Activated T-helper 1 cell treated with anti-CD3 and anti-CD28 coated beads, Interleukin-12 subunit alpha, Interleukin-12 subunit beta, Interleukin-2, Interleukin-4 antibody, amounts not matched to agents 30 ng/mL and 10 ng/mL and 1 ng/mL, durations not matched to agents 14 hours and 24 hours and 36 hours (primary cell): ENCODE measurements at regions of chr3 and their contacts with region 1.

Region 1: DNA sequence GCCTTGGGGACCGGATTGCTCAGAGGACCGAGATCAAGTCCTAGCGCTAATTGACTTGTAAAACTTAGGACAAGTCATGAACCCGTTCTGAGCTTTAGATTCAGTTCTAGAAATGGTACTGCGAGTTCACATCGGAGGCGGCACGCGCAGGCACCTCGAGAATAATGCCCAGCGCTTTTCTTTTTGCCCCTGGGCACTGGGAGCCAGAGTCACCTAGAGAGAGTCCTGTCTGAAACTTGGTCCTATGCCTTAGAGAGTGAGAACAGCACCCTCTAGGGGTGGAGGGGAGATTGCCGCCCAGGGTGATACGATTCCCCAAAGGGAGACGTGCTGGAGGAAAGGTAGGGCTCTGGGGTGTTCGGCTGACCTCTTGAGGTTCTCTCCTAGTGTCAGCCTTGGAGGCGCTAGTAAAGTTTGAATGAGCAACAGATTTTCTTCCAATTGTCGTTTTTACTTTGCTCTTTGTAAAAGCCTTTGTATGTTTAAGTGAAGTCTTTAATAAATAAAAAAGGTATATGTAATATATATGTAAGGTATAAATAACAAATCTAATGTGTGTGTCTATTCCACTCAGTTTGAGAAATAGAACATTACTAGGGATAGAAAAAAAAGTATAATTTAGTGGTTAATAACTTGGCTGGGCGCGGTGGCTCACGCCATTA is 826 bp downstream of the EEF1AKMT4 start:
- DNase-seq: peak; percentile 85
- H3K4me3 Mint-ChIP-seq: peak overlapping the region; percentile 93
- H3K27ac Mint-ChIP-seq: peak overlapping the region; percentile 97
- H3K4me1 Mint-ChIP-seq: peaks cover 24% of the 10 kb centered on the region
- H3K27me3 Mint-ChIP-seq: no peaks in the 10 kb centered on the region

Region 2: DNA sequence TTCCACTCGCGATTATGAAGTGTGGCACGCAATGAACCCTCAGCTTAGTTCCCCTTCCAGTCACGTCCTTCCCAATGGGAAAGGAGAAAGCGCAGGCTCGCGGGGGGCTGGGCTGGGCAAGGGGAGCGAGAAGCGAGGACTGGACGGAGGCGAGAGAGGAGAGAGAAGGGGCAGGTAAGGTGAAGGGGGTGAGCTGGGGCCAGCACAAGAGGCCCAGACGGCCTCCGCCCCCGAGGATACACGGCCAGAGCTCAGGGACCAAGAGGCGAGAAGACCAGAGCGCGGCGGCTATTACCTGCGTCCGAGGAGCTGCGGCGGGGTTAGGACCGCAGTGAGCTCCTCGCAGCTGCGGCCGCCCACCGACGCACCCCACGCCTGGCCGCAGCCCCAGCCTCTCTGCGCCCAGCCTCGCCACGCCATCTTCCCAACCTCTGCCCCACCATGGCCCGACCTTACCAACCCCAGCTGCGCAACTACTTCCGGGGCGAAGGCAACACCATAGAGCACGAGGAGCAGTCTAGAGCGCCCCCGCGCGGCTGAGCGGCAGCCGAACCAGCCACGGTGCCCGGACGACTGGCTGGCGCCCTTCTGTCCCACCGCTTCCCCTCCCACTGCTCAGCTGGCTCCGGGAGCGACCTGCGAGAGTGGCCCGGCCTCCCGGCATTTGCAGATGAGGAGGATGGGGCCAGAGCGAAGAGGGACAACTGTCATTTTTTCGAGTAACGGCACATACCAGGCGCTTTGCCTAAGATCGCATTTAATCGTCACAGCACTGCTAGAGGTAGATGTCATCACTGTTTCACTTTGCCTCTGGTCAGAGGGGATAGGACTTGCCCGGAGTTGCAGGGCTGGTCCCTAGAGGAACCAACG is 365.6 kb before region 1 on chr3 and contains the start of gene PARL:
- intact Hi-C with region 1: loop called (anchors 1 kb)
- DNase-seq: peak; percentile 93
- H3K4me3 Mint-ChIP-seq: peak within 1 kb of the TSS; percentile 98
- H3K27ac Mint-ChIP-seq: peak within 1 kb of the TSS; percentile 99
- H3K4me1 Mint-ChIP-seq: peaks cover 35% of the 10 kb centered on the region
- H3K27me3 Mint-ChIP-seq: no peaks in the 10 kb centered on the region
- total RNA-seq, gene PARL: 93.7 and 98.2 TPM in 2 replicates

Region 3: GRCh38 chr3:184135149-184135910 is 115.0 kb before region 1 on chr3 and contains the start of gene EIF2B5:
- intact Hi-C with region 1: loop called (anchors 1 kb)
- DNase-seq: peak; percentile 83
- H3K4me3 Mint-ChIP-seq: peak within 1 kb of the TSS; percentile 92
- H3K27ac Mint-ChIP-seq: peak within 1 kb of the TSS; percentile 85
- H3K4me1 Mint-ChIP-seq: peaks cover 31% of the 10 kb centered on the region
- H3K27me3 Mint-ChIP-seq: no peaks in the 10 kb centered on the region
- total RNA-seq, gene EIF2B5: 75.6 and 75.9 TPM in 2 replicates

Region 4: DNA sequence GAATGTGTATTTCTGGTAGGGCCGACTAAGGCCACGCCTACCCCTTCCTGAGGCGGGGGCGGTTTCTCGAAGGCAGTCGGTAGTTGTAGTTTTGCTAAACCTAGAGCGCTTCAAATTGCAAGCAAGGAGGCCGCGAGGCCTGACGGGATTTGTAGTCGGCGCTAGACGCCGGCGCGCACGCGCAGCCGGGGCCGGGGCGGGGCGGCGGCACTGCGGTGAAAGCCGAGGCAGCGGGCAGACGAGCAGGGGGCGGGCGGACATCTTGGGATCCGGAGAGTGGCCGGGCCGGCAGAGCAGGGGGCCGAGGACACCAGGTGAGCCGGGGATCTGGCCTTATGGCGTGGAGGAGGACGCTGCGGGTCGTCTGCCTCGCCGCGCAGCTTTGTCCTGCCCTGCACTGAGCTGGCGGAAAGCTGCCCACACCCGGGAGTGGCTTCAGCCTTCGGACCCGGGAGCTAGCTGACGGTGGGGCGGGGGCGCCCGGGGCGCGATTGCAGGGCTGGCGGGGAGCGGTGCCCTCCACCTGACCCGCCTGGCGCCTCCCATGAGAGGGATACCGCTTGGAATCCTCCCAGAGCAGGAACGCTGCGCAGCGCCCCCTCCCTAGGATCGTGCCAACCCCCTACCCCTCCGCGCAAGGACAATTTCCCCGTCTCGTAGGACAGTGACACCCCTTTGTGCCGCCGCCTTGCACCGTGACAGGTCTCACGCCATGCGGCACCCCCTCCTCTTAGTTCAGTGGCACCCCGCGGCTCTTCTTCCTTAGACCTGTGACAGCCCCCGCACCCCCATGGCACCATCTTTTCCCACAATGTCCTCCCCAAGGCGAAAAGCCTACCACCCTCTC is 75.4 kb before region 1 on chr3 and contains the start of gene AP2M1:
- intact Hi-C with region 1: loop called (anchors 1 kb)
- DNase-seq: peak; percentile 99
- H3K4me3 Mint-ChIP-seq: peak within 1 kb of the TSS; percentile 95
- H3K27ac Mint-ChIP-seq: peak within 1 kb of the TSS; percentile 85
- H3K4me1 Mint-ChIP-seq: peaks cover 28% of the 10 kb centered on the region
- H3K27me3 Mint-ChIP-seq: no peaks in the 10 kb centered on the region
- total RNA-seq, gene AP2M1: 235 and 238 TPM in 2 replicates

Region 5: GRCh38 chr3:184261270-184261853 is 11.1 kb after region 1 on chr3 and contains the start of gene CAMK2N2:
- intact Hi-C with region 1: loop called (anchors 1 kb)
- DNase-seq: peak; percentile 50
- H3K4me3 Mint-ChIP-seq: peak within 1 kb of the TSS; percentile 83
- H3K27ac Mint-ChIP-seq: peak within 1 kb of the TSS; percentile 78
- H3K4me1 Mint-ChIP-seq: peaks cover 17% of the 10 kb centered on the region
- H3K27me3 Mint-ChIP-seq: peaks cover 37% of the 10 kb centered on the region
- total RNA-seq, gene CAMK2N2: 0.15 and 0.52 TPM in 2 replicates

Region 6: GRCh38 chr3:184314363-184314699 is 64.0 kb after region 1 on chr3 and contains the start of gene EIF4G1:
- intact Hi-C with region 1: loop called (anchors 1 kb)
- DNase-seq: peak; percentile 92
- H3K4me3 Mint-ChIP-seq: peak within 1 kb of the TSS; percentile 88
- H3K27ac Mint-ChIP-seq: peak within 1 kb of the TSS; percentile 93
- H3K4me1 Mint-ChIP-seq: peaks cover 29% of the 10 kb centered on the region
- H3K27me3 Mint-ChIP-seq: no peaks in the 10 kb centered on the region
- total RNA-seq, gene EIF4G1: 657 and 706 TPM in 2 replicates